Heart right ventricle (tissue), 16 donors: ENCODE measurements at regions of chr3 and their contacts with region 1.

Region 1: DNA sequence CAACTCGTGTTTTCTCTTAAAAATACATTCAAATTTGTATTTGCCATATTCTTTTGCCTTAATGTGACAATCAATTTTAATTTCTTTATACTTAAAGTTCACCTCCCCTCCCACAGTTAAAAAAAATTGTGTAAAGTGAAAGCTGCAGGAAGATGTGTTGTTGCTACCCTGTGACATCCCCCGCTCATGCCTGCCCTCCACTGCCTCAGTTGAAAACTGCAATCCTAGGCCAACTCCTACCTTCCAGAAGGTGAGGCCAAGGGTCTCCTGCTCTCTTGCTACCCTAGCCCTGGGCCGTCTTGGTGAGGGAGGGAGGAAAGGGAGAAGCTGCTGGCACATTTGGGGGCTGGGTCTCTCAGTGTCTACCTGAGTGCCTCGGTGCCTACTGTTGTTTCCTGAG is 57.0 kb upstream of the CMTM7 start:
- DNase-seq: no peak
- ATAC-seq: peak in 1 of 8 donors; percentile 13
- H3K4me3 ChIP-seq: no peak overlapping the region
- H3K27ac ChIP-seq: no peak overlapping the region
- H3K4me1 ChIP-seq: peaks cover 0 to 24% (median 5%) of the 10 kb centered on the region in 9 donors
- H3K27me3 ChIP-seq: no peaks in the 10 kb centered on the region
- CTCF ChIP-seq: peak in 4 of 9 donors; percentile 12 to 37 (median 14)

Region 2: DNA sequence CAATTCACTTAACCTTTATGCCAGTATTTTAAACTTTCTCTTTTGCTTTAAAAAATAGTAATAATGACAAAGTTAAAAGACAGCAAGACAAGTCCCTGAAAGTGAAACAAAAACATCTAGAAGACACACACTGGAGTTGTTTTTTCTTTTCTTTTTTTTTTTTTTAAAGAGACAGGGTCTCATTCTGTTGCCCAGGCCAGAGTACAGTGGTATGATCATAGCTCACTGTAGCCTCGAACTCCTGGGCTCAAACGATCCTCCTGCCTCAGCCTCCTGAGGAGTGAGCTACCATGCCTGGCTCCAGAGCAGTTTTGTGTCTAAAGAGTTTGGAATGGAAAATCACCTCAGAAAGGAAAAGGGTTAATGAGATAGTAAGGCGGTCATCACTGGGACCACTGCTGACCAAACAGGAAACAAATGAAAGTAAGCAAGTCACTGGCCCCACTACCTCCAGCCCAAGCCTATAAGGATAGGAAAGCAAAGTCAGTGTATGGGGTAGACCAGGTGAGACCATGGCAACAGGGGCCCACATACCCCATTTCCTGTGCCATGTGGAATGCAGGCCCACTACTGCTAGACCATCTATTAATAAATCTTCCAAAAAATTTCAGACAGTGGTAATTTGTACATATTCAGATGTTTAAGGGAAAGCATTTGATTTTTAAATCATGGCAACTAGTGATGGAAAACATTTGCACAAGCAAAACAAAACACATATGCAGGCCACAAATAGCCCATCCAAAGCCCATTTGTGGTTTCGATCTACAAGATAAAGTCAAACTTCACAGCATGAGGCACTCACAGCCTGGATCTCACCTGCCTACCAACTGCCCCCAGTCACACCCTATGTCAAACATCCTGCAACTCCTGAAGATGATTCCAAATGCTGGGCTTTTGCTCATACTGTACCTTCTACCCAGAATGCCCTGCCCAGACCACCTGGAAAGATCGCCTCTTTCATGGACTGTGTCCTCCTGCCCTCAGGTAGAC is 416.2 kb before region 1 on chr3:
- intact Hi-C with region 1: loop called in 1 of 10 experiments (anchors 10 kb)
- DNase-seq: no peak
- ATAC-seq: peak in 2 of 8 donors; percentile 19 to 61
- H3K4me3 ChIP-seq: peak overlapping the region in 5 of 10 donors; percentile 2 to 34 (median 5)
- H3K27ac ChIP-seq: peak overlapping the region in 4 of 10 donors; percentile 30 to 52 (median 36)
- H3K4me1 ChIP-seq: peaks cover 0 to 24% (median 6%) of the 10 kb centered on the region in 9 donors
- H3K27me3 ChIP-seq: no peaks in the 10 kb centered on the region
- CTCF ChIP-seq: no peak